Cardiac septum (tissue), 1 donor: ENCODE measurements at regions of chr6 and their contacts with region 1.

Region 1: GRCh38 chr6:105484238-105485161 is 81.6 kb upstream of the PREP start:
- DNase-seq: no peak

Region 2: GRCh38 chr6:105522626-105523322 is 38.3 kb after region 1 on chr6:
- intact Hi-C with region 1: no loop called
- DNase-seq: no peak

Region 3: GRCh38 chr6:105608711-105609374 is 124.3 kb after region 1 on chr6:
- intact Hi-C with region 1: loop called (anchors 5 kb)
- DNase-seq: no peak

Region 4: DNA sequence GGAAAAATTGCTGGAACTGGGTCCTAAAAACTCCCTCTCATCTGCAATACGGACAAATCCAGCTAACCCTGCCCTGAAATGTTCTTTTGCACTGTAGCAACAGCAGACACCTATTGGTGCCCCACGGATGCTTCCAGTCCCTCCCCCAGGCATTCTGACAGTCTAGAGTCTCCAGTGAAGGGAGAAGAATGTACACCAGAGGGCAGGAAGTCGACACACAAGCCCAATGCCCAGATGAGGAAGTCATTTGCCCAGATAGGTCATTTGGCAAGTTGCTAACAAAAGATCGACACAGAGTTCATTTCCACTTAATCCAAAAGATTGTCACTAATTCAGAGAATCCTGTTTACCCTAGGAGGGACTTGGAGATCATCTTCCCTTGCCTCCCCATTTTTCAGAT is 308.6 kb after region 1 on chr6:
- intact Hi-C with region 1: loop called (anchors 10 kb)
- DNase-seq: no peak

Region 5: GRCh38 chr6:106085984-106086813 is 601.7 kb after region 1 on chr6 and contains the start of gene PRDM1:
- intact Hi-C with region 1: loop called (anchors 5 kb)
- DNase-seq: peak; percentile 96
- total RNA-seq, gene PRDM1: 2.0 TPM

Region 6: GRCh38 chr6:106223300-106223930 is 738.9 kb after region 1 on chr6:
- intact Hi-C with region 1: loop called (anchors 10 kb)
- DNase-seq: no peak

Region 7: DNA sequence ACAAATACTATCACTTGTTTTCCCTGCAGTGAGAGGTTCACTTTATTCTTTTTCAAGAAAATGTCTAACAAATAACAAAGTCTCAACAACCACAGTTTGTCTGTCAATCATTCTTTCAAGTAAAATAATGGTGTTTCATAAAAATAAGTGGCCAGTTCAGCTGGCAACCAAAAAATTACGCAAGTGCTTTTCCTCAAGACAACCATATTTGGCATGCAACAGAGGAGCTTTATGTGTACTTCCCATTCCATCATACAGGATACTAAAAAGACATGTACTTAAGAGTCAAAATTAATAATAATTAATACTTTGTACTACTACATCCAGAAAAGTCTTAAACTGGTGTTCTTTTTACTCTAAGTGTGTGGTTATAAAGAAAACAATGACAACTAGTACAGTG is 806.5 kb after region 1 on chr6:
- intact Hi-C with region 1: loop called (anchors 10 kb)
- DNase-seq: no peak